ENCODE measurements at regions of chr3 and their contacts with region 1.

Region 1: GRCh38 chr3:50245831-50246516 is 10.0 kb downstream of the GNAI2 start:
- DNase-seq: no peak
- ATAC-seq: peak; percentile 90
- H3K4me3 ChIP-seq: peak overlapping the region; percentile 70
- H3K27ac ChIP-seq: peak overlapping the region; percentile 71
- H3K4me1 ChIP-seq: peaks cover 52% of the 10 kb centered on the region
- H3K27me3 ChIP-seq: no peaks in the 10 kb centered on the region
- CTCF ChIP-seq: peak; percentile 96 to 99 (median 98)
- EP300 ChIP-seq: peak in 1 of 2 experiments; percentile 42; a peak in 1 of 4 replicates
- POLR2A ChIP-seq: peak; percentile 57
- RAD21 ChIP-seq: peak; percentile 89

Region 2: DNA sequence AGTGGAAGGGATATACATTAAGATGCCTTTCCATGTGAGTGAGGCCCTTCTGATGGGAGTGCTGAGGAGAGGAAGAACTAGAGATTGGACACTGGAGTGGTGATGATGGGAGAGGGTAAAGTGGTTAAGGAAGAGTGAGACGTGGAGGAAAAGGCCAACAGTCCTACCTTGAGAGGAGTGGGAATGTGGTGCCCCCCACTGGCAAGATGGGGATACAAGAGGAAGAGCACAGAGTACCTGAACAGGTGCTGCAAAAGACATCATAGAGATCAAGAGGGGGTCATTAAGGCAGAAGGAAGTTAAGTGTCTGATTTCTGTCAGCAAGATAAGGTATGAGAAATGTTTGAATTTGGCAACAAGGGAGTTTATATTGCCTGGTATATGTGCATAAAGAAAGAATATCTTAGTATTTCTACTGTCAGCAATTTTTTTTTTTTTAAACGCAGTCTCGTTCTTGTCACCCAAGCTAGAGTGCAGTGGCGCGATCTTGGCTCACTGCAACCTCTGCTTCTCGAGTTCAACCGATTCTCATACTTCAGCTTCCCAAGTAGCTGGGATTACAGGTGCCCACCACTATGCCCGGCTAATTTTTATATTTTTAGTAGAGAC is 1293.4 kb before region 1 on chr3:
- CTCF ChIA-PET with region 1: no interaction called
- POLR2A ChIA-PET with region 1: no interaction called
- RAD21 ChIA-PET with region 1: no interaction called
- SMC1A ChIA-PET with region 1: no interaction called
- in situ Hi-C with region 1: no loop called
- intact Hi-C with region 1: no loop called
- DNase-seq: no peak
- ATAC-seq: peak; percentile 70
- H3K4me3 ChIP-seq: no peak overlapping the region
- H3K27ac ChIP-seq: no peak overlapping the region
- H3K4me1 ChIP-seq: no peaks in the 10 kb centered on the region
- H3K27me3 ChIP-seq: no peaks in the 10 kb centered on the region
- CTCF ChIP-seq: peak; percentile 66 to 71 (median 66)
- EP300 ChIP-seq: no peak
- POLR2A ChIP-seq: no peak
- RAD21 ChIP-seq: peak; percentile 73

Region 3: GRCh38 chr3:50272911-50273693 is 27.1 kb after region 1 on chr3:
- CTCF ChIA-PET with region 1: interaction called, 17 read pairs
- POLR2A ChIA-PET with region 1: no interaction called
- RAD21 ChIA-PET with region 1: interaction called, 9 read pairs
- SMC1A ChIA-PET with region 1: interaction called, 4 read pairs
- in situ Hi-C with region 1: no loop called
- intact Hi-C with region 1: loop called (anchors 2 kb)
- DNase-seq: peak; percentile 44
- ATAC-seq: peak; percentile 95
- H3K4me3 ChIP-seq: no peak overlapping the region
- H3K27ac ChIP-seq: no peak overlapping the region
- H3K4me1 ChIP-seq: peaks cover 6% of the 10 kb centered on the region
- H3K27me3 ChIP-seq: peaks cover 7 to 8% of the 10 kb centered on the region in 2 experiments; a peak in 3 of 4 replicates
- CTCF ChIP-seq: peak; percentile 98 to 99 (median 98); a peak in 5 of 6 replicates
- EP300 ChIP-seq: no peak
- POLR2A ChIP-seq: no peak
- RAD21 ChIP-seq: peak; percentile 93